Activated CD8-positive, alpha-beta T cell treated with anti-CD3 and anti-CD28 coated beads for 36 hours (primary cell): ENCODE measurements at regions of chr11 and their contacts with region 1.

Region 1: GRCh38 chr11:57463671-57464538 is 3.6 kb downstream of the RTN4RL2 start:
- DNase-seq: no peak
- ATAC-seq: no peak
- H3K4me3 Mint-ChIP-seq: no peak overlapping the region
- H3K27ac Mint-ChIP-seq: no peak overlapping the region
- H3K4me1 Mint-ChIP-seq: peaks cover 9% of the 10 kb centered on the region
- H3K27me3 Mint-ChIP-seq: peaks cover 20% of the 10 kb centered on the region
- CTCF ChIP-seq: no peak

Region 2: DNA sequence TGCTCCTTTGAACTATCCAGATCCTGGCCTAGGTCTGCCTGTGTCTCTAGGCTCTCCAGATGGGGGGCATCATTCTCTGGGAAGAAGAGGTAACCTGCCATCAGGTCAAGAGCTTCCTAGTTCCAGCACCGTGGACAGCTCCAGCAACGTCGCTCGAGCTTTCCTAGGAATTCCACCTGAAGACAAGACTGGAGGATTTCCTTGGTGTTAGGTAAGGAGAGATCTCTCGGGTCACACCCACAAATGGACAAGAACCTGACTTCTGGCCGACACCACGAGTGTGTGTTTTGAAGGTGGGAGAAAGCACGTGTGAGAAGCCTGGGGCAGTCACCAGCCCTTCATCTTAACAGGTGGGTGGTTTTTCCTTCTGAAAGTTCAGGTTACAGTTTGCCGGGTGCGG is 84.2 kb before region 1 on chr11:
- CTCF ChIA-PET with region 1: no interaction called
- POLR2A ChIA-PET with region 1: no interaction called
- intact Hi-C with region 1: no loop called
- DNase-seq: no peak
- ATAC-seq: no peak
- H3K4me3 Mint-ChIP-seq: no peak overlapping the region
- H3K27ac Mint-ChIP-seq: no peak overlapping the region
- H3K4me1 Mint-ChIP-seq: no peaks in the 10 kb centered on the region
- H3K27me3 Mint-ChIP-seq: peaks cover 18% of the 10 kb centered on the region
- CTCF ChIP-seq: no peak

Region 3: DNA sequence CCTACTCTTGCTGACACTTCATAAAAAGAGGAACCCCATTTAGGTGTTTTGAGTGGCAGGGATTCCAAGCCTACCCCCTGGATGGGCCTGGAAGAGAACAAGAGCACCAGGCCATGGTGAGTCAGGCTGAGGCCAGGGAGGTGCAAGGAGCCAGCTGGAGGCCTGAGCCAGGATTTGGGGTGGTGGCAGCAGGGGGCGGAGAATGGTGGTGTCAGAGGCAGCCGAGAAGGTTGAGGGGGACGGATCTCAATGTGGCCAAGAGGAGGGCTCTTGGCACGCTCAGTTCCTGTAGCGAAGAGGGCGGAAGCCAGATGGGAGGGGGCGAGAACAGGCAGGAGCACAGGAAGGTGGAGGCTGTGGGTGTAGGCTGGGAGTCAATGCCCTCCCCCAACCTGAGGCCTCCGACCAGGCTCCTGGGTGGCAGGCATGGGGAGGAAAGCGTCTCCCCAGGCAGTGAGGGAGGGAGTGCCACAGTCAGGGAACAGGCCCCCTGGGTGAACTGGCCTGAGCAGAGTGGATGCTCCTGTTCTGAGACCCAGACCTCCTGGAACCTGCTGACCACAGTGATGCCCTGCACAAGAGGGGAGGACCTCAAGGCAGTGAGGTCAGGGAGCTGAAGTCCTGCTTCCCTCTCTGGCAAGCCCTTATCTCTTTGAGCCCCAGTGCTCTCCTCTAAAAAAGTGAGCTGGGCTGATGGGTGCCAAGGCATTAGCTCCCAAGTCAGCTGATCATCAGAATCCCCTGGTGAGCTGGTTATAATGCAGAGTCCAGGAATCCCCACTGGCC is 10.3 kb after region 1 on chr11:
- CTCF ChIA-PET with region 1: interaction called, 254 read pairs
- POLR2A ChIA-PET with region 1: interaction called, 12 read pairs
- intact Hi-C with region 1: no loop called
- DNase-seq: peak; percentile 82
- ATAC-seq: peak; percentile 83
- H3K4me3 Mint-ChIP-seq: peak overlapping the region; percentile 40
- H3K27ac Mint-ChIP-seq: peak overlapping the region; percentile 77
- H3K4me1 Mint-ChIP-seq: peaks cover 28% of the 10 kb centered on the region
- H3K27me3 Mint-ChIP-seq: peaks cover 5% of the 10 kb centered on the region
- CTCF ChIP-seq: no peak